ENCODE measurements at regions of chr15 and their contacts with region 1.

Region 1: DNA sequence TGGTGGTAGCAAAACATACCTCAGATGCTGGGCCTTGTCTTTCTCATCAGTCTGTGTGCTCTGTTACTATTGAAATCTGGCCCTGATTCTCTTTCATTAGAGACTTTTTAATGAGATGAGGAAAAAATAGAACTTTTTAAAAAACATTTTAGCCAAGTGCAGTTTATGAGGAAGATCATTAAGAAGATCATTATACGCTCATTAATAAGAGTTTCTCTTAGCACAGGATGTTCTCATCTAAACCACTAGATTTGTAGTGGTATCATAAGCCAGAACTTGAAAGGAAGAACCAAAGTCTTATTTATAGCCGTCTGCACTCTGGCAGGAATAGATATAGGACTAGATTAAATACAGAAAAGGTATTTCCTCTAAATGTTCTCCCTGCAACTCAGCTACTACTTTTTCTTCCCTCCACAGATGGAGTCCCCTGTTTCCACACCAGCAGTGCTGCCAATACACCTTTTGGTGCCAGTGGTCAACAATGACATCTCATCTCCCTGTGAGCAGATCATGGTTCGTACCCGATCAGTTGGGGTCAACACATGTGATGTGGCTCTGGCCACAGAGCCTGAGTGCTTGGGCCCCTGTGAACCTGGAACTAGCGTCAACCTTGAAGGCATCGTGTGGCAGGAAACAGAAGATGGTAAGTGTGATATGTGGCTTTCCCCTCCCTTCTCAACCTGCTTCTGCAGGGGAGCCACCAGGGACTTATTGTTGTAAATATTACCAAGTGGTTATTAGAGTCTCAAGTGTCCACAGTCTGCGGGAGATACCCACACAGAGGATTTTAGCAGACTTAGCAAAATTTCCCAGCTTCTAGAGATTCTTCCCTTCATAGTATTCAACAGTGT is 152.8 kb downstream of the RBPMS2 start:
- DNase-seq: peak; percentile 87
- H3K4me3 Mint-ChIP-seq: peak overlapping the region; percentile 75
- H3K27ac Mint-ChIP-seq: peak overlapping the region; percentile 91
- H3K4me1 Mint-ChIP-seq: peaks cover 78% of the 10 kb centered on the region
- H3K27me3 Mint-ChIP-seq: no peaks in the 10 kb centered on the region

Region 2: DNA sequence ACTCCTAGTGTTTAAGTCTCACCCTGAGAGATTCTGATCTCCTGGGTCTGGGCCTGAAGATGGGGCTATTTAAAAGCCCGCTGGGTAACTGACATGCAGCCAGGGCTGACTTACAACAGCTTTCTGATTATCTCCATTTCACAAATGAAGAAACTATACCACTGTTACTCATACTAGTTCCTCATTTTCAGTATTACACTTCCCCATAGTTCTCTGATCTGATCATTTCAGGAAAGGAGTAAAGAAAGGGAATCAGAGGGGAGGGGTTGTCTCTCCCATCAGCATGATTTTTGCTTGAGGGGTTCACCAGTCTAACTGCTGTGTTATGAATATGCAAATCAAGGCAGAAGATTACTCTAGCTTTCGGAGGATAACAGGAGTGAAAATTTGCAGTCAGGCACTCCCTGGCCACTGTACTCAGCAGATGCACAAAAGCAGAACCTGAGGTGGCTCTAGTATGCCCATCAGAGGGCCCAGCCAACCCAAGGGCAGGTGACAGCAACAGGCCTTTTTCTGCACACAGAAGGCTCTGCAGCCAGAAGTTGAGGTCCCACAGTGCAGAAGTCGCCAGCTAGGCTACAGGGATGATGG is 635.8 kb before region 1 on chr15:
- intact Hi-C with region 1: no loop called
- DNase-seq: no peak
- H3K4me3 Mint-ChIP-seq: no peak overlapping the region
- H3K27ac Mint-ChIP-seq: peak overlapping the region; percentile 16
- H3K4me1 Mint-ChIP-seq: peaks cover 15% of the 10 kb centered on the region
- H3K27me3 Mint-ChIP-seq: no peaks in the 10 kb centered on the region

Region 3: DNA sequence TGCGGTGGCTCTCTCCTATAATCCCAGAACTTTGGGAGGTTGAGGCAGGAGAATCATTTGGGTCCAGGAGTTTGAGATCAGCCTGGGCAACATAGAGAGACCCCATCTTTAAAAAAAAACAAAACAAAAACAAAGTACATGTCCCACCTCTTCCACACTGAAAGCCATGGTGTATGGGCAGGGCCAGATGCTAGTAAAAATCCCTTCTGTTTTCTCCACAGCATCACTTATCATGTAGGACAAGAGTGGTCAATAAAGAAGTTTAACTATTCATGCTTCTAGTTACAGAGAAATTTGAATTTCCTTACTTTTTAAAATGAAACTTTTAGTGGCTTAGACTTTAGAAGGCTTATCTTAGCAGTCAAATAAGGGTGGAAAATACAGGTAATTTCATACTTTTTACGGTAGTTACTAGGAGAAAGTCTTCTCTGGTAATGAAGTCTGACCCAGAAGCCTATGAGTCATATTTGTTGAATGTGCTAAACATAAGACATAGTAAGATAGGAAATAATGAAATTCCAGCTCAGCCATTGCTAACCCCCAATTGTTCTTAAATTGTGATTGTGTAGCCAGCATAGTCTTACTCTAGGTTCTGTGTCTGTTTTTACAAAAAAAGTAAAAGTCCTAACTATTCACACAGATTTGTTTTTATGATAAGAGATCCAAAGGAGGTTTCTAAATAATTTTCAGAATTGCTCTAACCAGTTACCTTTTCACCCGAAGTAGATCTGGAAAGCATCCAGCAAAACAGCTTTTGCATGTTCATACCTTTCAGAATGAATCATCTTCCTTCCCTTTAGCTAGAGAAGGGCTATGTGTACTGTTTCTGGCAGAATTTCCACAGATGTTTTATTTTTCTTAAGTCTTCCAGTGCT is 178.7 kb before region 1 on chr15:
- intact Hi-C with region 1: loop called (anchors 5 kb)
- DNase-seq: peak; percentile 70
- H3K4me3 Mint-ChIP-seq: peak overlapping the region; percentile 76
- H3K27ac Mint-ChIP-seq: peak overlapping the region; percentile 94
- H3K4me1 Mint-ChIP-seq: peaks cover 40% of the 10 kb centered on the region
- H3K27me3 Mint-ChIP-seq: no peaks in the 10 kb centered on the region

Region 4: GRCh38 chr15:64536244-64536836 is 86.3 kb before region 1 on chr15:
- intact Hi-C with region 1: loop called (anchors 2 kb)
- DNase-seq: peak; percentile 64
- H3K4me3 Mint-ChIP-seq: peak overlapping the region; percentile 14
- H3K27ac Mint-ChIP-seq: peak overlapping the region; percentile 29
- H3K4me1 Mint-ChIP-seq: peaks cover 37% of the 10 kb centered on the region
- H3K27me3 Mint-ChIP-seq: no peaks in the 10 kb centered on the region

Region 5: GRCh38 chr15:64596701-64597476 is 25.7 kb before region 1 on chr15:
- intact Hi-C with region 1: loop called (anchors 2 kb)
- DNase-seq: peak; percentile 79
- H3K4me3 Mint-ChIP-seq: peak overlapping the region; percentile 85
- H3K27ac Mint-ChIP-seq: peak overlapping the region; percentile 90
- H3K4me1 Mint-ChIP-seq: peaks cover 50% of the 10 kb centered on the region
- H3K27me3 Mint-ChIP-seq: no peaks in the 10 kb centered on the region

Region 6: GRCh38 chr15:64640146-64640871 is 17.7 kb after region 1 on chr15:
- intact Hi-C with region 1: no loop called
- DNase-seq: no peak
- H3K4me3 Mint-ChIP-seq: peak overlapping the region; percentile 26
- H3K27ac Mint-ChIP-seq: peak overlapping the region; percentile 69
- H3K4me1 Mint-ChIP-seq: peaks cover 40% of the 10 kb centered on the region
- H3K27me3 Mint-ChIP-seq: no peaks in the 10 kb centered on the region